ENCODE measurements at regions of chr19 and their contacts with region 1.

Region 1: GRCh38 chr19:40598121-40598917 is 2.9 kb upstream of the LTBP4 start:
- DNase-seq: peak; percentile 86 to 96 (median 96)
- ATAC-seq: peak; percentile 61 to 62
- H3K4me3 ChIP-seq: no peak overlapping the region
- H3K27ac ChIP-seq: no peak overlapping the region
- H3K4me1 ChIP-seq: peaks cover 4% of the 10 kb centered on the region
- H3K27me3 ChIP-seq: no peaks in the 10 kb centered on the region

Region 2: DNA sequence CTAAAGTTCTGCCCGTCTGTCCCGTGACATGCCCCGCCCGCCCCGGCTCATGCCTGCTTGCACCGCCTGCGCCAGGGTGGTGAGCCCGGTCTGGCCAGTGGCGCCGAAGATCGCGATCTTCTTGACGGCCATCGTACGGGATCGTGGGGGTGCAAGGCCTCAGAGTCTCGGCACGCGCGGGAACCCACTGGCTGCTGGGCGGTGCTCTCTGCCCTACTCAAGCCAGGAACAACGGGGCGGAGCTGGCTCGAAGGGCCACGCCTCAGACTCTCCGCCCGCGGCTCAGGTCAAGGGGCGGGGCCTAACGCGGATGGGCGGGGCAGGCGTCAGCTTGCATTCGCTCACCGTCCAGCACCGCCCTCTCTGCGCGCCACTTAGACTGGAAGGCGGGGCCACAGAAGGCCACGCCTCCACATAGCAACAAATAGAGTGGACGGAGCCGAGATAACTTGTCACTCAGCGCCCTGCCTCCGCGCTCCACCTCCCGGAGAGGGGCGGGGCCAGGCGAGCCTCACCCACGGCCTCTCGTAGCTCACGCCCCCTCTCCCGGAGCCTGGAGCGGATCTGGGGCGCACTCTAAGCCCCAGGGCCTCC is 132.7 kb before region 1 on chr19 and contains the start of gene BLVRB:
- intact Hi-C with region 1: loop called in 2 of 4 experiments (anchors 5 to 10 kb)
- DNase-seq: peak; percentile 99 to 100 (median 100)
- ATAC-seq: peak; percentile 97
- H3K4me3 ChIP-seq: peak within 1 kb of the TSS; percentile 77
- H3K27ac ChIP-seq: peak within 1 kb of the TSS; percentile 86
- H3K4me1 ChIP-seq: peaks cover 9% of the 10 kb centered on the region
- H3K27me3 ChIP-seq: no peaks in the 10 kb centered on the region
- total RNA-seq, gene BLVRB: 72.0 to 102 (median 86.2) TPM

Region 3: DNA sequence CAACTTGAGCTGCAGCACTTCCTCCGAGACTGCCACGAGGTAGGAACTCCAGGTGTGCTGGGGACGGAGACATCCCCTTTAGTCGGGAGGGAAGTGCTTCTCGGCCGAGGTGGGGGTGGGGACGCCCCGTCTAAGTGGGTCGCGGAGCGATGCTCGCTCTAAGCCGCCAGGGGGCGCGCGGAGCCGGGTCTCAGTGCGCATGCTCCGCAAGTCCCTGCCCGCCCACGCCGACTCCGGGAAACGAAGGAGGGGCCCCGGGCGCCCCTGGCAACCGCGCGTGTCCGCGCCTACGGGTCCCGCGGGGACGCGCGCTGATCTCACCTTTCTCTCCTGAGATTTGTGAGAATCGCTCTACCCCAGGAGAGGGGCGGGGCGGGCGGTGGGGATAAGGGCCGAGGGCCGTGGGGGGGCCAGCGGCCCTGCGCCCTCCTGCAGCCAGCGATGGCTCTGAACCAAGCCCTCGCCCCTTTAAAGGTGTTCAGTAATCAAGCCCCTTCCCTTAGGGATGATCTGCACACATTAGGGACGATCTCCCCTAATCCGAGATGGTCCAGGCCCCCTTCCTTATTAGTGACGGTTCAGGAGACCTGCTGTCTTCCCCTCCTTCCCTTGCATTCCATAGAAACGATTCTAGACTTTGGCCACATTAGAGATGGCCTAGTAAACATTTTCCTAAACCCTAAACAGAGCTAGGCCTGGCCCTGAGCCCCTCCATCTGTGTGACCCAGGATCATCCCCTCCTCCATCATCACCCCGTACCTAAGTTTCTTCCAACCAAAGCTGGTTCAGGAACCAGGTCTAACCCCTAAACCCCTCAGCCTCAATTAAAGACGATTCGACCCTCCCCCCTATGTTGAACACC is 69.0 kb before region 1 on chr19:
- intact Hi-C with region 1: loop called in 3 of 4 experiments (anchors 2 to 10 kb)
- DNase-seq: peak; percentile 82 to 94 (median 94)
- ATAC-seq: peak; percentile 86 to 92
- H3K4me3 ChIP-seq: peak overlapping the region; percentile 49
- H3K27ac ChIP-seq: no peak overlapping the region
- H3K4me1 ChIP-seq: no peaks in the 10 kb centered on the region
- H3K27me3 ChIP-seq: no peaks in the 10 kb centered on the region

Region 4: GRCh38 chr19:40549007-40549708 is 49.2 kb before region 1 on chr19:
- intact Hi-C with region 1: loop called in 2 of 4 experiments (anchors 5 to 10 kb)
- DNase-seq: peak; percentile 55 to 87 (median 82)
- ATAC-seq: peak; percentile 68 to 69
- H3K4me3 ChIP-seq: no peak overlapping the region
- H3K27ac ChIP-seq: no peak overlapping the region
- H3K4me1 ChIP-seq: no peaks in the 10 kb centered on the region
- H3K27me3 ChIP-seq: no peaks in the 10 kb centered on the region

Region 5: DNA sequence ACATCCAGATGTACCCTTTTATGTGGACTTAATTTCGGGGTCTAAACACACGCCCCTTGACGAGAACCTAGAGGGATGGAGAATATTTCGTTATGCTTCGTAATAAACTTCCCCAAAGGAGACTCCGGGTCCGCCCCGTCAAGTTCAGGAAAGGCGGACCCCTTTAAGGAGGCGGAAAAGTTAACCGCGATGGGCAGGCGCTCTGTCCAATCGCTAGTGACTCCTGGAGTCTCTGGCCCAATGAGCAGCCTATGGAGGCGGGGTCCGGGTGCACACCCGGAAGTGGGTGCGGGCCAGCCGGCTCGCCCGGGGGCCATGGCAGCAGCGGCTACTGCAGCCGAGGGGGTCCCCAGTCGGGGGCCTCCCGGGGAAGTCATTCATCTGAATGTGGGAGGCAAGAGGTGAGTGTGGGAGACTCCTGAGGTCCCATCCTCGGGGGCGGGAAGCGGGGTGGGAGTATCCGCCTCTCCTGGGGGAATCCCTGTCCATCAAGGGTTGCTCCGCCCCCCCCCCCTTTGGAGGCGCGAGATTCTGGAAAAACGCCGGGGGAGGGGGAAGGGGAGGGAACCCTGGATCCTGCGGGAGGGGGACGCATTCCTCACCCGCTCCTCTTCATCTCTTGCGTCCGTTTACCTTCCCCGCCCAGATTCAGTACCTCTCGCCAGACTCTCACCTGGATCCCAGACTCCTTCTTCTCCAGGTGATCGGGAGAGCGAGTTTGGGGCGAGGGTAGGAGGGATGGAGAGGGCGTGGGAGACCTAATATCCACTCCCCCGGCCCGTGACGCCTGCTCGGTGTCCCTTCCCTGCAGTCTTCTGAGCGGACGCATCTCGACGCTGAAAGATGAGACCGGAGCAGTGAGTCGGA is 21.5 kb before region 1 on chr19 and contains the start of gene SHKBP1:
- intact Hi-C with region 1: no loop called
- DNase-seq: peak; percentile 96 to 98 (median 98)
- ATAC-seq: peak; percentile 98 to 99
- H3K4me3 ChIP-seq: peak within 1 kb of the TSS; percentile 59
- H3K27ac ChIP-seq: peak within 1 kb of the TSS; percentile 34
- H3K4me1 ChIP-seq: no peaks in the 10 kb centered on the region
- H3K27me3 ChIP-seq: no peaks in the 10 kb centered on the region
- total RNA-seq, gene SHKBP1: 19.7 to 23.0 (median 20.4) TPM

Region 6: GRCh38 chr19:40640744-40641143 is 42.4 kb after region 1 on chr19:
- intact Hi-C with region 1: no loop called
- DNase-seq: peak in 2 of 3 donors; percentile 71
- ATAC-seq: peak; percentile 30 to 33
- H3K4me3 ChIP-seq: no peak overlapping the region
- H3K27ac ChIP-seq: no peak overlapping the region
- H3K4me1 ChIP-seq: no peaks in the 10 kb centered on the region
- H3K27me3 ChIP-seq: no peaks in the 10 kb centered on the region